Transverse colon (tissue), 4 donors: ENCODE measurements at regions of chr4 and their contacts with region 1.

Region 1: GRCh38 chr4:39559626-39560025 is 32.4 kb upstream of the UGDH start:
- DNase-seq: peak; percentile 54
- H3K4me3 ChIP-seq: no peak overlapping the region
- H3K27ac ChIP-seq: peak overlapping the region in 3 of 4 donors; percentile 33 to 75 (median 64)
- H3K4me1 ChIP-seq: peaks cover 0 to 19% (median 12%) of the 10 kb centered on the region in 4 donors
- H3K27me3 ChIP-seq: no peaks in the 10 kb centered on the region
- CTCF ChIP-seq: no peak
- EP300 ChIP-seq: no peak
- POLR2A ChIP-seq: no peak

Region 2: DNA sequence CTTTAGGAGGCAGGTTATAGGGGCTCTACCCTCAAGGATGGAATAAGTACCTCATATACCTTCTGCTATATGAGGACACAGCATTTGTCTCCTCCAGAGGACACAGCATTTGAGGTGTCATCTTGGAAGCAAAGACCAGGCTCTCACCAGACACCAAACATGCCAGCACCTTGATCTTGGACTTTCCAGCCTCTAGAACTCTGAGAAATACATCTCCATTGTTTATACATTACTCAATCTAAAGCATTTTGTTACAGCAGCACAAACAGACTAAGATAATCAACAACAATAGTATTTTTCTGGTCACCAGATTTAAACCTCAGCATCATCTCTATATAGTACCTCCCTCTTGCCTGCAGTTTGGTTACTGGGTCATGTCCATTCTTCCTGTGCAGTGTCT is 1133.1 kb before region 1 on chr4:
- in situ Hi-C with region 1: no loop called
- intact Hi-C with region 1: loop called (anchors 5 kb)
- DNase-seq: no peak
- H3K4me3 ChIP-seq: no peak overlapping the region
- H3K27ac ChIP-seq: no peak overlapping the region
- H3K4me1 ChIP-seq: no peaks in the 10 kb centered on the region
- H3K27me3 ChIP-seq: no peaks in the 10 kb centered on the region
- CTCF ChIP-seq: no peak
- EP300 ChIP-seq: no peak
- POLR2A ChIP-seq: no peak